ENCODE measurements at regions of chr15 and their contacts with region 1.

Region 1: DNA sequence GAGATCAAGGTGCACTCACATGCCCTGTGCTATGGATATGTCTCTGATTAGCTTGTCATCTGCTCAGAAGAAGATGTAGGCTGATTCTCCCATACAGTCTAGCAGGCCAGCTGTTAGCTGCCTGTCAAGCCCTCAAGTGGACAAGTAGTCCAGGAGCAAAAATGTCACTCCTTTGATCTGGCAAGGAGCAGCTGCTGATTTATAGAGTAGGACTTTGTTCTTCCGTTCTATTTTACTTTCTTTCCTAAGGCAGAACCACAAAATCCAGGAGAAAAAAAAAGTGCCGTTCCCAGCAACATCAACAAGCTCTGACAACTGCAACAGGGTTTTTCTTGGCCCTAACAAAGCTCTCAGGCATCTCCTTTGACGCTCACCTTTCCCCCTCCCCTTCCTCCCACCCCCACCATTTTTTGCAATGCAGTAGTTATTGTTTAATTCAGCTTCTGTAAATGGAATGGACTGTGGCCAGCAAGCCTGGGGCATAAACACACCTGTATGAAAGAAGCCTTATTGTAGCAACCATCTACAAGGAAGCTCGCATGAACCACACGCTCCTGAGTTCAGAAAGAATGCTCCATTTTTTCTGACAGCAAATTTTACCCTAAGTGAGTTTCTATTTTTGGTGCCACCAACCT is 196.3 kb downstream of the MEIS2 start:
- DNase-seq: no peak
- H3K4me3 ChIP-seq: no peak overlapping the region
- H3K27me3 ChIP-seq: no peaks in the 10 kb centered on the region
- CTCF ChIP-seq: no peak

Region 2: GRCh38 chr15:37002041-37002672 is 98.1 kb after region 1 on chr15:
- CTCF ChIA-PET with region 1: no interaction called
- POLR2A ChIA-PET with region 1: interaction called, 19 read pairs
- DNase-seq: no peak
- H3K4me3 ChIP-seq: no peak overlapping the region
- H3K27me3 ChIP-seq: no peaks in the 10 kb centered on the region
- CTCF ChIP-seq: no peak